Ascending aorta (tissue), 2 donors: ENCODE measurements at regions of chr13 and their contacts with region 1.

Region 1: DNA sequence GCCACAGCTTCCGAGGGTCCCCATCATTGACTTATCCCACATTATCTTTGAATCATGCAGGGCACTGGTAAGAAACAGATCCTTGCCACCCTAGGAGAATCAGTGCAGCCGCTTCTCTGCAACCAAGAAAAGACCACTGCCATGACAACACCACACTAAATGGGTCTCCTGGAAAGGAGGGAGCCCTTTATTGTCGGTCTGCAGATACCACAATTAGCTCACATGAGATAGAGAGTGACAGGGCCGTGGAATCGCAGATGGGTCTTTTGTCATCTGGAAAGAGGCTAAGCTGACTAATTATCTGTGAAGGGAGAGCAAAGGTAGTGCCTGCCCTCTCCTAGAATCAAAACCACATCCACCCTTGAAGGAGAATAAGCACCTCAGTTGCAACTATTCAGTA is 178.3 kb upstream of the MYO16 start:
- DNase-seq: no peak
- H3K4me3 ChIP-seq: no peak overlapping the region
- H3K27ac ChIP-seq: no peak overlapping the region
- H3K4me1 ChIP-seq: no peaks in the 10 kb centered on the region
- H3K27me3 ChIP-seq: no peaks in the 10 kb centered on the region
- CTCF ChIP-seq: no peak

Region 2: DNA sequence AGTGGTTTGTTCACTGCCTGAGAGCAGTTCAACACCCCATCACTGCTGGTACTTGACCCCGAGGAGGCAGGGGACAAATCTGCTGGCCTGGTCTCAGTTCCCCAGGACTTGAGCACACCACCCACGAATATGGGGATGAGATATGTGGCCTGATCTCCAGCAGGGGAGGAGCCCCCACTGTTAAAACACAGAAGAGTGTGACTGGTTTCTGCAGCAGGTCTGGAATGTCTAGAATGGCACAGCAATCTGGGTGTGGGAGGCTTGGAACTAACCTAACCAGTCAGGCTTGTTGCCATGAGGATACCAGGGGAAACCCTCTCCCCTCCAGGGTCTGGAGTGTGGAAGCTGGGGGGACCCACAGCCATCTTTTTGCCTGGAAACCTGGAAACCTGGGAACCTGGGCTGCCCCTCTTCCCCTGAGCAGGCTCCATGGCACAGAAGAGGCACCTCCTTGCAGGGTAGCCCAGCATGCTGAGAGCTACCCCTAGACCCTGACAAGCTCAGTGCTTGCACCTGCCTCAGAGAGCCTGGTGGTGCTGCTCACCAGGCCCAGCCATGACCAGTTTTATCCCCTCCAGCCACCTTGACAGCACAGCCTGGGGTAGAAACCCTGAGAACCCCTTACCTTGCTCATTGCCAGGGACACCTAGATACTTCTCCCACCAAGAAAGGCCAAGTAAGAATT is 509.6 kb before region 1 on chr13:
- intact Hi-C with region 1: no loop called
- DNase-seq: no peak
- H3K4me3 ChIP-seq: no peak overlapping the region
- H3K27ac ChIP-seq: no peak overlapping the region
- H3K4me1 ChIP-seq: no peaks in the 10 kb centered on the region
- H3K27me3 ChIP-seq: no peaks in the 10 kb centered on the region
- CTCF ChIP-seq: no peak

Region 3: DNA sequence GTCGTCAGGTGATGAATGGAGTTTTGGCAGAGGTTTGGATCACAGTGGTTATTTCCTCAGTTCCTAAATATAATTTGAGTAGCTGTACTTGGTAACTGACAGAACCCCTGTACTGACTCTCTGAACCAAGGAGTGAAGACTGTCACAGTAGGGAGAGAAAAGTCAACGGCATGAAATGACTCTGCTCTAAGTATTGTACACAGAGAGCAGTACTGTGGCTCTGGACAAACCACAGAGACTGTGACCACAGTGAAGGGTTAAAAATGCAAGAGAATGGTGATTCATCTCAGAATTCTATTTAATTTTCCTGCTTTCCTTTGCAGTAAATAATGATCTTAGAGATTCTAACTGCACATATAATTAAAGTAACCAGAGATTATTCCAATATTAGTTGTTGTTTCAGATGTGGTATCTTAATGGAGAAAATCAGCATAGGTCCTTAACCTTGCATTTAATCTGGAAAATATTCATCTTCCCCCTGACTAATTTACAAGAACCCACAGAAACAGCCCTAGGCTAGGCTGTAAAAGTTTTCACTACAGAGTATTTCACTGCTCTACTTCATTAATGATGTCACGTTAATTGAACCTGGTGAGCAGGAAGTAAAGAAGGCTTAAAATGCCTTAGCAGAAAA is 457.8 kb before region 1 on chr13:
- intact Hi-C with region 1: loop called (anchors 5 kb)
- DNase-seq: no peak
- H3K4me3 ChIP-seq: no peak overlapping the region
- H3K27ac ChIP-seq: no peak overlapping the region
- H3K4me1 ChIP-seq: no peaks in the 10 kb centered on the region
- H3K27me3 ChIP-seq: no peaks in the 10 kb centered on the region
- CTCF ChIP-seq: no peak